ENCODE measurements at regions of chr11 and their contacts with region 1.

Region 1: DNA sequence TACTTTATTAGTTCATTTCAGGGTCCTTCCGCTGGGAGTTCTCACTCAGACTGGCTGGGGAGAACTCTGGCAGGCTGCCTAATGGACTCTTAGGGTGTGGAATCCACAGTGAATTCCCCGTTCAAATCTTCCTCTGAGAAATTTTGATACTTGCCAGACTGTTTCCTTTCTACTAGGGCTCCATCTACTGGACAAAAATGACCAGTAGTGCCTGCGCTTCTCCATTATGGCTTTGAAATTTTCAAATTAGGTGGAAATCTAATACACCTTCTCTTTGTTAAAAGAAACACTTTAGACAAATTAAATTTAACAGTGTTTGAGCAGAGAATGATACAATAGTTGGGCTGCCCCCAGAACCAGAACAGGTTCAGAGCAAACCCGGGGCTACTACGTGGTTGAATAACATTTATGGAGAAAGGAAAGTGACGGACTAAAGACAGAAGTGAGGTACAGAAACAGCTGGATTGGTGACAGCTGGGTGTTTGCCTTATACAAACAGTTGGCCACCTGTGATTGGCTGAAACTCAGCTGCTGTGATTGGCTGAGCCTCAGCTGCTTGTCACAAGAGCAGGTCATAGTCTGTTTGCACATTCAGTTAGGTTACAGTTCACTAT is 52.9 kb upstream of the FDX1 start:
- ATAC-seq: peak; percentile 80 to 96 (median 86)
- H3K4me3 ChIP-seq: no peak overlapping the region
- H3K27ac ChIP-seq: no peak overlapping the region
- H3K4me1 ChIP-seq: peaks cover 0 to 7% of the 10 kb centered on the region in 2 donors

Region 2: GRCh38 chr11:110200241-110200640 is 176.6 kb before region 1 on chr11:
- in situ Hi-C with region 1: loop called in 6 of 9 experiments (anchors 10 to 25 kb)
- ATAC-seq: peak in 2 of 8 experiments; percentile 12 to 37
- H3K4me3 ChIP-seq: no peak overlapping the region
- H3K27ac ChIP-seq: no peak overlapping the region
- H3K4me1 ChIP-seq: peaks cover 11 to 14% of the 10 kb centered on the region in 2 donors

Measured in motor neuron (in vitro differentiated cells).